ENCODE measurements at regions of chr2 and their contacts with region 1.

Region 1: DNA sequence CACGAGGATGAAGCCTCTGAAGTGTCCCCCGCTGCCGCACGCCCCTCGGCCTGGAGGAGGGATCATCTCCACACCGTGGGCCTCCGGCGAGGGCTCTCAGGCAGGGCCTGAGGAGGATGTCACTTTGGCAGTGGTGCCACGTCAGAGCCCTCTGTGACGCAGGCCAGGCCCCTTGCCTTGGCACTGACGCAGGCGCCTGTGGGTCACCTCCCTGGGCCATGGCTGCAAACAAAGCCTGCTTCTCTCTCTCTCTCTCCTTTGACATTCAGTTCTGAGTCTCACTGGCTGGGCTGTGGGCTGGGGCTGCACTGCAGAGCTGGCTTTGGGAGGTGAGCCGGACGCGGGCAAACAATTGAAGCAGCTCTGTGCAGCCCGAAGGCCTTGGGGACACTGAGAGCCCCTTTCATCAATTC is 273.7 kb downstream of the TWIST2 start:
- DNase-seq: no peak
- H3K4me3 ChIP-seq: no peak overlapping the region
- H3K27ac ChIP-seq: peak overlapping the region in 3 of 4 donors; percentile 15 to 55 (median 44)
- H3K4me1 ChIP-seq: peaks cover 0 to 7% (median 2%) of the 10 kb centered on the region in 4 donors
- H3K27me3 ChIP-seq: no peaks in the 10 kb centered on the region
- CTCF ChIP-seq: no peak
- EP300 ChIP-seq: no peak
- POLR2A ChIP-seq: no peak

Region 2: GRCh38 chr2:238053191-238053776 is 1068.3 kb before region 1 on chr2:
- in situ Hi-C with region 1: no loop called
- intact Hi-C with region 1: no loop called
- DNase-seq: no peak
- H3K4me3 ChIP-seq: no peak overlapping the region
- H3K27ac ChIP-seq: no peak overlapping the region
- H3K4me1 ChIP-seq: no peaks in the 10 kb centered on the region
- H3K27me3 ChIP-seq: peaks cover 15% of the 10 kb centered on the region
- CTCF ChIP-seq: no peak
- EP300 ChIP-seq: no peak
- POLR2A ChIP-seq: no peak

Region 3: DNA sequence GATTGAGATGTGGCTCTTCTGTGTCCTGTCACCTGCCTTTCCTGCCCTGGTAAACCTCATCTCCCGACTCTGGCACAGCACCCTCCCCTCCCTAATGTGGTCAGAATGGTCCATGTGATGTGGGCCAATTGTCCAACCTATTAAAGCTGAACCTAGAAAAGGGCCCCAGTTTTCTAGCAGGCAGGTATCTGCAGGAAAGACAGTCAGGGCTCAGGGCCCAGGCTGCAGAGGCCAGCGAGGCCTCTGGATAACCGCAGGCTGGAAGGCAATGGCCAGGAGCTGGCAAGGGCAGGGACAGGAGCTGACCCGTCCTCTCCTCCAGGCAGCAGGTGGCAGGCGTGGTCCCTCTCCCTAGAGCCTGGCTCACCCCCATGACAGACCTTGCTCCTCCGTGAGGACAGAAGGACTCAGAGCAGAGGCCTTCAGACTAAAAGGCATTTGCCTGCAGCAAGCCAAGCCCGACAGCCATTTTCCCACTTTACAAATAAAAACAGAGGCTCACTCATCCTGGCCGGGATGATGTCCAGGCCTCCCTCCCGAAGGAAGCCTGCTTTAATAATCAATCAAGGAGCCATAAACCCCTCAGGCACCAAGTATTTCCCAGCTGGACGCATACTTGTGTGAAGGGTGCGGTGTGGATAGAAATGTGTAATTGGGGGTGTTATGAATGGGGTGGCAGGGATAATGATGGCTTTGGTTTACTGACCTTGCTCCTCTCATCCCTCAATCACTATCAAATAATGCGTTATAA is 166.6 kb before region 1 on chr2:
- in situ Hi-C with region 1: no loop called
- intact Hi-C with region 1: no loop called
- DNase-seq: no peak
- H3K4me3 ChIP-seq: no peak overlapping the region
- H3K27ac ChIP-seq: no peak overlapping the region
- H3K4me1 ChIP-seq: no peaks in the 10 kb centered on the region
- H3K27me3 ChIP-seq: peaks cover 13% of the 10 kb centered on the region
- CTCF ChIP-seq: no peak
- EP300 ChIP-seq: no peak
- POLR2A ChIP-seq: no peak

Region 4: GRCh38 chr2:238970553-238971081 is 151.0 kb before region 1 on chr2:
- in situ Hi-C with region 1: no loop called
- intact Hi-C with region 1: no loop called
- DNase-seq: peak; percentile 51
- H3K4me3 ChIP-seq: no peak overlapping the region
- H3K27ac ChIP-seq: no peak overlapping the region
- H3K4me1 ChIP-seq: peaks cover 0 to 8% (median 3%) of the 10 kb centered on the region in 4 donors
- H3K27me3 ChIP-seq: no peaks in the 10 kb centered on the region
- CTCF ChIP-seq: peak; percentile 85 to 99 (median 98)
- EP300 ChIP-seq: no peak
- POLR2A ChIP-seq: no peak

Region 5: GRCh38 chr2:239085201-239085992 is 36.2 kb before region 1 on chr2:
- in situ Hi-C with region 1: no loop called
- intact Hi-C with region 1: loop called (anchors 1 kb)
- DNase-seq: no peak
- H3K4me3 ChIP-seq: no peak overlapping the region
- H3K27ac ChIP-seq: no peak overlapping the region
- H3K4me1 ChIP-seq: no peaks in the 10 kb centered on the region
- H3K27me3 ChIP-seq: no peaks in the 10 kb centered on the region
- CTCF ChIP-seq: no peak
- EP300 ChIP-seq: no peak
- POLR2A ChIP-seq: no peak